ENCODE measurements at regions of chr20 and their contacts with region 1.

Region 1: GRCh38 chr20:25005220-25005619 is 12.7 kb upstream of the APMAP start:
- DNase-seq: peak; percentile 69 to 73
- H3K4me3 ChIP-seq: no peak overlapping the region
- H3K27ac ChIP-seq: peak overlapping the region in 3 of 5 donors; percentile 29 to 62 (median 51)
- H3K4me1 ChIP-seq: peaks cover 7 to 38% (median 23%) of the 10 kb centered on the region in 4 donors
- H3K27me3 ChIP-seq: no peaks in the 10 kb centered on the region
- CTCF ChIP-seq: no peak
- EP300 ChIP-seq: no peak
- POLR2A ChIP-seq: no peak

Region 2: DNA sequence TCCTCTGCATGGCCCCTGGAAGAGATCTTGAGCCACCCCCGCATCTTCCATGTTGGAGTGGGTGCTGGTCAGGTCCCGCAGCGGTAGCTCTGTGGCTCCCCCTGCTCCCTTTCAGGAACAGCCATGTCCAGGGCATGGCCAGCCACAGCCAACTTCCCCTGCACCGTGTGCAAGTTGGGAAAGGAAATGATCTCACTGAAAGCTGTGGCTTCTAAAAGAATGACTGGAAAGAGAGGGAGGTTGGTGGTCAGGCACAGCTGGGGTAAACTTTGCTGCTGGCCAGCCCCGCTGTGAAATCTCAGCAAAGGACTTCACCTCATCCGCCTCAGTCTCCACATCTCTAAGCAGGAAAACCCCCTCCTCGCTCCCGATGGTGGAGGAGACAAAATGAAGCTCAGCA is 209.8 kb before region 1 on chr20:
- intact Hi-C with region 1: no loop called
- DNase-seq: no peak
- H3K4me3 ChIP-seq: no peak overlapping the region
- H3K27ac ChIP-seq: no peak overlapping the region
- H3K4me1 ChIP-seq: no peaks in the 10 kb centered on the region
- H3K27me3 ChIP-seq: peaks cover 0 to 8% (median 0%) of the 10 kb centered on the region in 3 donors
- CTCF ChIP-seq: no peak
- EP300 ChIP-seq: no peak
- POLR2A ChIP-seq: no peak

Region 3: GRCh38 chr20:25044660-25045342 is 39.6 kb after region 1 on chr20:
- intact Hi-C with region 1: loop called (anchors 5 kb)
- DNase-seq: no peak
- H3K4me3 ChIP-seq: no peak overlapping the region
- H3K27ac ChIP-seq: peak overlapping the region in 3 of 5 donors; percentile 16 to 86 (median 81)
- H3K4me1 ChIP-seq: peaks cover 83 to 100% (median 96%) of the 10 kb centered on the region in 4 donors
- H3K27me3 ChIP-seq: no peaks in the 10 kb centered on the region
- CTCF ChIP-seq: no peak
- EP300 ChIP-seq: no peak
- POLR2A ChIP-seq: no peak

Region 4: DNA sequence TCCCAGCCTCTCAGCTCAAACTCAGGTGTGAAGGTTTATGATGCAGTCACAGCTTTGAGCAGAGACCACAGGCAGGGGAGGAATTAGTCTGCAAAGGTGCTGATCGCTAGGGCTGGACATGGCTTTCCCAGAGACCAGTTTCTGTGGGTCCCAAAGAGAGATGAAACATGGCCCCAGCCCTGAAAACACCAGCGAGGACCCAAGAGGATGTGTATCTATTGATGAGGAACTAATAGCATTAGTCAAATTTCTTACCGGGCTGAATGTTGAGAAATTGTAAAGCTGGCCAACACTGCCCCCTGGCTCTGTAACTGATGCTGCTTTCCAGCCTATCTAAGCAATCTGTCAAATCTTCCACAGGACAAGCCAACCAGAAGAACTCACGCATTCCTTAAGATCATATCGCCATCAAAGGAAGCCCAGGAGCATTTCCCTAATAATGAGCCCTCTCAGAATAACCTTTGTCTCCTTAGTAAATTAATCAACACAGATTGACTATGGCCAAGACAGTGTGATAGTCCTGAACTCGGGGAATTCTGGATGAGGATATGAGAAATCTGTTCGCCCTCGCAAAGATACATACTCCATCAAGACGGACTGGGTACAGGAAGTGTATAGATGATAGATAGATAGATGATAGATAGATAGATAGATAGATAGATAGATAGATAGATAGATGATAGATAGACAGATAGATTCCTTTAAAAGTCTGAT is 60.6 kb after region 1 on chr20:
- intact Hi-C with region 1: no loop called
- DNase-seq: peak; percentile 73 to 86
- H3K4me3 ChIP-seq: no peak overlapping the region
- H3K27ac ChIP-seq: no peak overlapping the region
- H3K4me1 ChIP-seq: peaks cover 5 to 24% (median 18%) of the 10 kb centered on the region in 4 donors
- H3K27me3 ChIP-seq: peaks cover 0 to 12% (median 0%) of the 10 kb centered on the region in 3 donors
- CTCF ChIP-seq: peak in 5 of 7 experiments; percentile 55 to 91 (median 78)
- EP300 ChIP-seq: no peak
- POLR2A ChIP-seq: no peak